Breast epithelium (tissue), 4 donors: ENCODE measurements at regions of chr3 and their contacts with region 1.

Region 1: DNA sequence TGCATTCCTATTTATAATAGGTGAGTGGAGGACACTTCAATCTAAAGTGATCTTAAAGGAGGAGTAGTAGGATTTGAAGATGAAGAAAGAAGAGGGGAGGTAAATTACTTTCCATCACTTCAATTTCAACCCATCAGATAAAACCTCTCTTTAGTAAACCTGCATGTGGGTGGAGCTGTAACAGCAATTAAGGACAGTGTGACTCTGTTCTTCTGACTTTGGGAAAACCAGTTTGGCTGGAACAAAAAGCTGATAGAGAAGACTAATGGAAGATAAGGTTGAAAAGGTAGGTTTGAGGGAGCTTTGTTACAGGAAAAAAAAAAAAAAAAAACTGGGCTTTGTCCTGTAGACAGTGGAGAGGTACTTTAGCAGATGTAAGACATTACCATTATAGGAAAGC is 4.4 kb upstream of the GSK3B start:
- DNase-seq: no peak
- H3K4me3 ChIP-seq: no peak overlapping the region
- H3K27ac ChIP-seq: no peak overlapping the region
- H3K4me1 ChIP-seq: peaks cover 0 to 9% of the 10 kb centered on the region in 2 donors
- H3K27me3 ChIP-seq: no peaks in the 10 kb centered on the region
- CTCF ChIP-seq: no peak
- POLR2A ChIP-seq: no peak

Region 2: DNA sequence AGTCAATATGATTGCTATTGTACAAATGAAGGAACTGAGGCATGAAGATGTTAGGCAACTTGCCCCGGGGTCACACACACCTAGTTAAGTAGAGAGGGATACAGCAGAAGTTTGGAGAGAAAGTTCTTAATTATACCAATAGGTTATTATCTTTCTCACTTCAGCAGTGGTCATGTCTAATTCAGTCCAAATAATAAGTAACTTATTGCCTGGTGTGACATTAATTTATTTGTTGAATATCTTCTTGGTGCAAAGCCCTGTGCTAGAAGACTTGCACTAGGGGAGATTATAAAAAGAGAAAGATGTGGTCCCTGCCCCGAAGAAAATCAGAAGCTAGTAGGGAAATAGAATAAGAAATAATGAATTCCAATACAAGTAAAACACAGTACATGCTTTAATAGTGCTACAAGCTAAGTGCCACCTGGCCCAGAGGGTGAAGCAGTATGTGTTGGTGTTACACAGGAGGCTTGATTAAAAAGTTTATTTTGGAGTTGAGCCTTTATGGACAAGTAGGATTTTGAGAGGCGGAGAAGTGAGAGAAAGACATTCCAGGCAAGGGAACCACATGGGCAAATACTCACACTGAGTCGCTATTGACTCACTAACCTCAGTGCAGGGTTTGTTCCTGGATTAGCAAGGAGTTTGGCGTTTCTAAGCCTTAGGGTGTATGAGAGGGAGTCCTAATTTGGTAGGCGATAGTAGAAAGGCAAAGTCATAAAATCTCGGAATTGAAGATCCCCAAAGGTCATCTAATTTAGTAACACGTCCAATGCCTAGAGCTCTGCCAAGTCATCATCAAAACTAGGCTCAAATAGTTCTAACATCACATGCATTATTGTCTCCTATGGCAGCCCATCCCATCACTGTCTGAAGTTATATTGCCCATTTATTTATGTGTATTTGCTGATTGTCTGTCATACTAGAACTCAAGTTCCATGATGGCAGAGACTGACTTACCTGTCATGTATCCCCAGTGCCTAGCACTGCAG is 14.7 kb after region 1 on chr3:
- intact Hi-C with region 1: loop called (anchors 1 kb)
- DNase-seq: no peak
- H3K4me3 ChIP-seq: no peak overlapping the region
- H3K27ac ChIP-seq: no peak overlapping the region
- H3K4me1 ChIP-seq: no peaks in the 10 kb centered on the region
- H3K27me3 ChIP-seq: no peaks in the 10 kb centered on the region
- CTCF ChIP-seq: no peak
- POLR2A ChIP-seq: no peak